Activated B cell treated with CpG ODN at 0.5 μM for 24 hours (primary cell): ENCODE measurements at regions of chr13 and their contacts with region 1.

Region 1: DNA sequence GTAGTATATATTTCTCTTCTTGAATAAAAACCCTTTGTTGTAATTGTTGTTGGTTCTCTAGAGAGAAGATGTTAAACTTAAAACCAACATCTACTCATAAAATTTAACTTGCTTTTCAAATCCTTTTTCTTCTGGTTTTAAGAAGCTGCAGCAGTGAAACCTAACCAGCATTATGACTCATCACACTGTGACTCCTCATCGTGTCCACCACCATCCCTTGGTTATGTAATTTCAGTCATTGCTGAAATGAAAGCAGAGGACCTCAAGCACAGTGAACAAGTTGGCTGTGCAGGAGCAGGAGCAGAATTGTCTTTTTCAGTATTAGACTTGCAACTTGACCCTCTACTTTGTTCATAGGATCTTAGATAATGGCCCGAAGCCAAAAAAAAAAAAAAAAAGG is 64.9 kb upstream of the HTR2A start:
- DNase-seq: no peak
- ATAC-seq: no peak
- H3K4me3 Mint-ChIP-seq: no peak overlapping the region
- H3K27ac Mint-ChIP-seq: no peak overlapping the region
- H3K4me1 Mint-ChIP-seq: peaks cover 2% of the 10 kb centered on the region
- H3K27me3 Mint-ChIP-seq: peaks cover 2% of the 10 kb centered on the region
- CTCF ChIP-seq: no peak

Region 2: GRCh38 chr13:47133011-47133445 is 171.3 kb after region 1 on chr13:
- CTCF ChIA-PET with region 1: no interaction called
- POLR2A ChIA-PET with region 1: no interaction called
- intact Hi-C with region 1: no loop called
- DNase-seq: no peak
- ATAC-seq: no peak
- H3K4me3 Mint-ChIP-seq: no peak overlapping the region
- H3K27ac Mint-ChIP-seq: no peak overlapping the region
- H3K4me1 Mint-ChIP-seq: no peaks in the 10 kb centered on the region
- H3K27me3 Mint-ChIP-seq: peaks cover 6% of the 10 kb centered on the region
- CTCF ChIP-seq: no peak

Region 3: DNA sequence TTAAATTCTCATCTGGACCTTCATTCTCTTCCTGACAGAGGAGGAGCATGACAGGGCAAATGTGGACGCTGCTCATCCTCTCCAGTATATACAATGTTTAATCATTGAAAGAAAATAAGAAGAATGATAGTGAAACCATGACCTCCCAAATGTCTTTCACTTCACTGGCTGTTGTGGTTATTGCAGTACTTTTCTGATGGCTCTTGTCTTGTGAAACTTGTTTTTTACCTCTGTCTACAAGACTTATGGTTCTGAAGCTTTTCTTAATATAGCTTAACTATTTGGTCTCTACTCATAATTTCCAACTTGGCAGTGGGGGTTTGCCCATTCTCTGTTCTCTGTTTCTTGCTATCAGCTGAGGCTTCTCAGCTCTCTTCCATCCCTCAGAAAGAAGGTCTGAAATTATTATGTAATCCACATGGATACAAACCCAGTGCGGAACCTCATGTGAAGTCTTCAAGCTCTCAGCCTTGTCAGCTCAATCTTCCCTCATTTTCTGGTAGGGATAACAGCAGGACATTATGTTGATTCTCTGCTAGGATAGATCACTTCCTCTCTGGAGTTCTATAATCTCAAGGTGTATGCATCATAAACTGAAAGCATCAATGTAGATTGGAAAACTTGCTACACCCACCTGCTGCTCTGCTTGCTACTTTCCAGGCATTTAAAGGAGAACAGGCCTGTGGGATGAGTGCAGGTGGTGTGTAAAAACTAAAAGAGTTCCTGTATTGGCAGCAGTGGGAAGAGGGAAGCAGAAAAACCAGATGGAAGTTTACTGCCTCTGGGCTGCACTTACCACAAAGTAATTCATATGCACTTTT is 185.5 kb after region 1 on chr13:
- CTCF ChIA-PET with region 1: no interaction called
- POLR2A ChIA-PET with region 1: no interaction called
- intact Hi-C with region 1: loop called (anchors 10 kb)
- DNase-seq: no peak
- ATAC-seq: no peak
- H3K4me3 Mint-ChIP-seq: no peak overlapping the region
- H3K27ac Mint-ChIP-seq: no peak overlapping the region
- H3K4me1 Mint-ChIP-seq: peaks cover 2% of the 10 kb centered on the region
- H3K27me3 Mint-ChIP-seq: peaks cover 3% of the 10 kb centered on the region
- CTCF ChIP-seq: no peak

Region 4: GRCh38 chr13:47241446-47241845 is 279.7 kb after region 1 on chr13:
- CTCF ChIA-PET with region 1: no interaction called
- POLR2A ChIA-PET with region 1: no interaction called
- intact Hi-C with region 1: no loop called
- DNase-seq: no peak
- ATAC-seq: no peak
- H3K4me3 Mint-ChIP-seq: no peak overlapping the region
- H3K27ac Mint-ChIP-seq: no peak overlapping the region
- H3K4me1 Mint-ChIP-seq: no peaks in the 10 kb centered on the region
- H3K27me3 Mint-ChIP-seq: no peaks in the 10 kb centered on the region
- CTCF ChIP-seq: no peak

Region 5: DNA sequence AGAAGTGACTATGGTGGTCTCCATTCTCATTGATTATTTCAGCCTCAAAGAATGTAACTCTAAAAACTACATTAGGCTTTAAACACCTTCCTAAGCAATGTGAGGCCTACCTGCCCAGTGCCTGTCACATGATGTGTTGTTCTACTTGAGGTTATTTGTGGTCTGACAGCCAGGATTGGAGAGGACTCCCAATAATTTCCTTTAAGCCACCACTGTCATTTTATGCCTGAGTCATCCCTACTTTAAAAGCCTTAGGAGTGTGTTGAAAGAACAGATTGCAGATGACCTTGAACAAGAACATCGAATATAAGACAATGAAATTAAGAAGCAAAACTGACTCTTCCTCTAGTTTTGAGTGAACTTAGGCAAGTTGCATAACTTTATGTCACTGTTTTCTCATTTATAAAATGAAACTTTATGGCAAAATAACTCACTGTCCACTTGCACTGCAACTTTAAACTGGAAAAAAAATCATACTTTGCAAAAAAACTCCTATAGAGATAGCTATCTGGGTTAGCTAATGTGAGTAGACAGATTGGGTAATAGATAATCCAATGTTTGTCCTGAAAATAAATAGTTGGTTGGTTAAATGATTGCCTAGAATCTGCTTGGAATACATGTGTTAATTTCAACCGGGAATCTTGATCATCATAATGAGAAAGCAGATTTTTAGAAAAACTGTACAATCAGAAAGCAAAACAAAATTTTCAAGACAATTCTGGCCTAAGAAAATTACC is 678.2 kb after region 1 on chr13:
- CTCF ChIA-PET with region 1: no interaction called
- POLR2A ChIA-PET with region 1: no interaction called
- intact Hi-C with region 1: no loop called
- DNase-seq: no peak
- ATAC-seq: no peak
- H3K4me3 Mint-ChIP-seq: no peak overlapping the region
- H3K27ac Mint-ChIP-seq: no peak overlapping the region
- H3K4me1 Mint-ChIP-seq: no peaks in the 10 kb centered on the region
- H3K27me3 Mint-ChIP-seq: no peaks in the 10 kb centered on the region
- CTCF ChIP-seq: no peak